Vagina (tissue), 2 donors: ENCODE measurements at regions of chr19 and their contacts with region 1.

Region 1: DNA sequence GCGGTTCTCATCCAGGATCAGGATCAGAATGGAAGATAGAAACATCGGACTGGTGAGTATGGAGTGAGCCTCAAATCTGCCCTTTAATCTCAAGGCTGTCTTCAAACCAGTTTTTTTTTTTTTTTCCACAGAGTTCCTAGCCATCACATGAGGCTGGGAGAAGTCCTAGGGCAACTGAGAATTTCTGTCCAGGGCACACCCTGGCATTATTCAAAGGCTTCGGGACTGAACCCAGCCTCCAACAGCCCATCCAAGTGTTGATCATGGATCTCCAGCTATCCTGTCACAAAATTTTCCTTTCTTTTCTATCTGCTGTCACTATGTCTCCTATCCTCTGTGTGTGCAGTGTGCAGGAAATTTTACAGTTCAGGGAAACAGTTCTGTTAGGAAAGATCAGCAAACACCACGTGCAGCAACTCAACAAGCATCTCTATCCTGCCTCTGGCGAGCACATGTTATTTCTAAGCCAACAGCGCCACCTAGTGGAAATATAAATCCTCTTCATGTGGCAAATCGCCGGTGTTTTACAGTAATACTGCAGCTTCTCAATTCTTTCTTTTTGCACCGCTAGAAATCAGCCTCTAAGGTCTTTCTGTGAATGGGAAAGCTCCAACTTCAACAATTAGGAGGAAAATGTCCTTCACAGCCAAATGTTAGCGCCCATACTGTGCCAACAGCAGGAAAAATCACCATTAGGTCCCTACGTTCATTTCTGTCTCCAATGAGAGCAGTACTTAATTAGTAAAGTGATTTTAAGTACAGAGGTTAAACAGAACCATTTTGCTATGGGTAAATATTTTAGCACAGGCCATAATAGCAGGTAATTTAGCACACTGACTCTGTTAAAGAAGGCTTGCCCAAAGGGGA is 21.4 kb upstream of the ZNF181 start:
- DNase-seq: no peak
- H3K4me3 ChIP-seq: no peak overlapping the region
- H3K27ac ChIP-seq: no peak overlapping the region
- H3K4me1 ChIP-seq: no peaks in the 10 kb centered on the region
- H3K27me3 ChIP-seq: no peaks in the 10 kb centered on the region
- CTCF ChIP-seq: peak; percentile 71 to 96 (median 84)
- POLR2A ChIP-seq: no peak

Region 2: DNA sequence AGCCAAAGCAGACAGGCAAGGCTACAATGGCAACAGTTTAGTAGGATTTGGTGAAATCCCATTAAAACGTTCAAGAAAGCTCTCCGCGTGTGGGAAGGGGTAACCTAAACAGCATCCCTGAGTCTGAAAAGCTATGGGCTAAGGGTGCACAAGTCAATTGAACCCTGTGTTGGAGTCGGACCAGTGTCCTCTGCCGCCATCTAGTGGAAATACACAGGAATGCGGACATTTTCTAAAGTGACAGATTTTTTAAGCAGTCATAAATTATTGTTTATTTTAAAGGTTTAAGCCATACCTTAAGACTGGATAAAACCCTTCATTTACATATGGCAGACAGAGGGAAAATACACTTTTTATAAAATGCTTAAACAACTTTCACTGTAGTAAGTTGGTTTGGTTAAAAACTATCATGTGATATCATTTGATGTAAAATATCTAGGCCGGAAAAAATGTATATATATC is 566.9 kb before region 1 on chr19:
- intact Hi-C with region 1: loop called (anchors 10 kb)
- DNase-seq: no peak
- H3K4me3 ChIP-seq: no peak overlapping the region
- H3K27ac ChIP-seq: no peak overlapping the region
- H3K4me1 ChIP-seq: no peaks in the 10 kb centered on the region
- H3K27me3 ChIP-seq: no peaks in the 10 kb centered on the region
- CTCF ChIP-seq: peak; percentile 63 to 73 (median 70)
- POLR2A ChIP-seq: no peak

Region 3: DNA sequence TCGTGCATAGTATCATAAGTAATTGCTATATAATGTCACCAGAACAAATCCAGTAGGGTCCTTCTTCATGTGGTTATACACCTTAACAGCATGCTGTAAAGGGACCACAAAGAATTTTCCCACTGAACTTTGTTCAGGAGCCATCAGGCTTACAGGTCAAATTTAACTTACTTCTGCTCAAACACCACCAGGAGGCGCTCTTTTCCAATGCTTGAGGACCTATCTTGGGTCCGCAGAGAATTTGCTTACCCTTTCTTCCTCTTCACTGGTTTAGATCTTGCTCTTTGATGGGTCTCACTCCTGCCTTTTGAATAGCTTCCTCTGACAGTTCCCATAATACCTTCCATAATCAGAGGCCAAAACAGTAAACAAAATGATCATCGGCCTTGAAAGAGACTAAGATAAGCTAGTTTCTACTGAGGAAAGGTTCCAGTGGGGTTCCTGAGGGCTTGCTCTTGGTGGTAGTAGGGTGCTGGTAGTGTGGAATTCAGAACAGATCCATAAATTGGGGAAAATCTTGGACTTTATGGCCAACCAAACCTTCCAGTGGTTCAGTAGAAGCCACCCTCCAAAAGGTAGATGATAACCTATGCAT is 73.0 kb before region 1 on chr19:
- intact Hi-C with region 1: loop called (anchors 5 kb)
- DNase-seq: no peak
- H3K4me3 ChIP-seq: no peak overlapping the region
- H3K27ac ChIP-seq: no peak overlapping the region
- H3K4me1 ChIP-seq: no peaks in the 10 kb centered on the region
- H3K27me3 ChIP-seq: no peaks in the 10 kb centered on the region
- CTCF ChIP-seq: peak; percentile 52 to 70 (median 54)
- POLR2A ChIP-seq: no peak